K562 (cell line): ENCODE measurements at regions of chr3 and their contacts with region 1.

Region 1: DNA sequence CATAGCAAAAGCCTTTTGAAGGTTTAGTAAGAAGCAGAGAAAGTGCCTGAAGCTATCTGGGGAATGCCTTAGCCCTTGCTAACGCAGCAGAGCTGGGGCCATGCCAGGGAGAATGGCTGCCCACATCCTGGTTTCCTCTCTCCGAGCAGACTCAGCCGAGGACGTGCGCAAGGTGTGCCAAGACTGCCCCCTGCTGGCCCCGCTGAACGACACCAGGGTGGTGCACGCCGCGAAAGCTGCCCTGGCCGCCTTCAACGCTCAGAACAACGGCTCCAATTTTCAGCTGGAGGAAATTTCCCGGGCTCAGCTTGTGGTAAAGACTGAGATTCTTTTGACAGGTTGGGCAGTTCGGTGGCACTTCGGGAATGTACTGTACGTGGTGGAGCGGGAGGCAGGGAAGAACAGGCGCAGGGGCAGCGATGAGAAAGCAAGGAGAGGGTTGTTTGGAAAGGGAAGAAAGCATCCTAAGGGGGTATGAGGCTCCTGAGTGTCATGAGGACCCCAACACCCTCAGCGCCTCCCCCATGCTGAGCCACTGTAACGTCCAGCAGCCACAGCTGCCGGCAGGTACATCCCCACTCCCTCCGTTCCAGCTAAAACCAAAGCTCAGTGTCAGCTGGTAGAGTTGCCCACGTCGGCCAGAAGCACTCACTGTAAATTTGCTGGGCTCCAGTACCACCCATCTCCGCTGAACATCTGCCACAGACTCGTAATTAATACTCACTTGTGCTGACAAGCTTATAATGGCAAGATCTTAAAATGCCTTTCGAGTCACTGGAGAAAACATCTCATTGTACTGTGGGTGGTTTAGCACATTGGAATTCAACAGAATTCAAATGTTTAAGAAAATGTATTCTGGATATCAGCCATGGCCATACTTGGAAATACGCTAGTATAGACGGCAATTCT is 4.4 kb downstream of the AHSG start:
- DNase-seq: peak; percentile 75 to 85 (median 82)
- ATAC-seq: peak; percentile 98
- H3K4me3 ChIP-seq: peak overlapping the region; percentile 15; the same call in 1 of the 2 replicates
- H3K27ac ChIP-seq: no peak overlapping the region
- H3K4me1 ChIP-seq: peaks cover 3 to 10% of the 10 kb centered on the region in 2 experiments; a peak in 3 of 5 replicates
- H3K27me3 ChIP-seq: peaks cover 10 to 61% of the 10 kb centered on the region in 2 experiments; a peak in 4 of 5 replicates
- CTCF ChIP-seq: peak; percentile 88 to 92 (median 92)
- EP300 ChIP-seq: no peak
- POLR2A ChIP-seq: no peak
- RAD21 ChIP-seq: peak; percentile 87 to 89

Region 2: GRCh38 chr3:186259612-186260383 is 357.5 kb before region 1 on chr3:
- CTCF ChIA-PET with region 1: interaction called, 3 read pairs
- POLR2A ChIA-PET with region 1: no interaction called
- in situ Hi-C with region 1: no loop called
- intact Hi-C with region 1: loop called (anchors 5 kb)
- DNase-seq: peak; percentile 74 to 81 (median 78)
- ATAC-seq: peak; percentile 99
- H3K4me3 ChIP-seq: no peak overlapping the region
- H3K27ac ChIP-seq: no peak overlapping the region
- H3K4me1 ChIP-seq: peaks cover 4 to 7% of the 10 kb centered on the region in 2 experiments; a peak in 2 of 5 replicates
- H3K27me3 ChIP-seq: peaks cover 32 to 66% of the 10 kb centered on the region in 2 experiments
- CTCF ChIP-seq: peak; percentile 89 to 91 (median 90)
- EP300 ChIP-seq: peak; percentile 6; the same call in 1 of the 2 replicates
- POLR2A ChIP-seq: no peak
- RAD21 ChIP-seq: peak; percentile 65 to 84

Region 3: GRCh38 chr3:186442162-186442561 is 175.1 kb before region 1 on chr3:
- CTCF ChIA-PET with region 1: no interaction called
- POLR2A ChIA-PET with region 1: no interaction called
- in situ Hi-C with region 1: no loop called
- intact Hi-C with region 1: no loop called
- DNase-seq: no peak
- ATAC-seq: no peak
- H3K4me3 ChIP-seq: no peak overlapping the region
- H3K27ac ChIP-seq: no peak overlapping the region
- H3K4me1 ChIP-seq: no peaks in the 10 kb centered on the region
- H3K27me3 ChIP-seq: peaks cover 0 to 6% of the 10 kb centered on the region in 2 experiments; a peak in 2 of 5 replicates
- CTCF ChIP-seq: no peak
- EP300 ChIP-seq: no peak
- POLR2A ChIP-seq: no peak
- RAD21 ChIP-seq: no peak

Region 4: DNA sequence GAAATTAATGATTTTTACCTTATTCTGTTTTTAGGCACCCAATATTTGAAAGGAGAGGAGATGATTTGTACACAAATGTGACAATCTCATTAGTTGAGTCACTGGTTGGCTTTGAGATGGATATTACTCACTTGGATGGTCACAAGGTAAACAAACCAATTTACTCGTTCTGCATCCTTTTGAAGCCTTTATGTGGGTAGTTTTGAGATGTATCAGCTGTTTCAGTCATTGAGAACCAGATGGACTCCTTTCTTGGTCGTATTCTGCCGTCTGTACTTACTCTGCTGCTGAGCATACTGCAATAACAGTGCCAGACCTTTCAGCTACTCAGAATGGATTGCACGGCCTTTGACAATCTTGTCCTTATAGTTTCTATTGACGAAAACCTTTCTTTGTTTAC is 33.5 kb before region 1 on chr3:
- CTCF ChIA-PET with region 1: interaction called, 12 read pairs
- POLR2A ChIA-PET with region 1: interaction called, 3 read pairs
- in situ Hi-C with region 1: no loop called
- intact Hi-C with region 1: loop called (anchors 5 kb)
- DNase-seq: no peak
- ATAC-seq: no peak
- H3K4me3 ChIP-seq: no peak overlapping the region
- H3K27ac ChIP-seq: no peak overlapping the region
- H3K4me1 ChIP-seq: peaks cover 0 to 6% of the 10 kb centered on the region in 2 experiments; a peak in 2 of 5 replicates
- H3K27me3 ChIP-seq: no peaks in the 10 kb centered on the region
- CTCF ChIP-seq: no peak
- EP300 ChIP-seq: no peak
- POLR2A ChIP-seq: no peak
- RAD21 ChIP-seq: no peak

Region 5: DNA sequence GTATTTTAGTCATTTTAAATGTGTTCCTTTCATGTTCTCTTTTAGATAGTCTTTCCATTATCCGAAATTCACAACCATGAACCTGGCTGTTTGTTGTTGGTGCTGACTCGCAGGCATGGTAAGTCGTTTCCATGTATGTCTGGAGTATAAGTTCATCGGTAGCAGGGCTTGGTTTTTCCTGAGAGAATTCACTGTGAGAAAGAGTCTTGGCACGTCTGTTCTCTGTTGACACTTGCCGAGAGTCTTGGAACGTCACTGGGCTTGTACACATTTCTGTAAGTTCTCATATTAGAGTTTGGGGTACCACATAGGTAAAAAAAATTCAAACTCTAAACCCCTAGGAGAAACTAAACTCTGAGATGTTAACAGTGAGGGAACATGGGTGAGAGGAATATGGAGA is 136.7 kb after region 1 on chr3:
- CTCF ChIA-PET with region 1: interaction called, 6 read pairs
- POLR2A ChIA-PET with region 1: no interaction called
- in situ Hi-C with region 1: loop called (anchors 10 kb)
- intact Hi-C with region 1: loop called (anchors 1 kb)
- DNase-seq: no peak
- ATAC-seq: no peak
- H3K4me3 ChIP-seq: no peak overlapping the region
- H3K27ac ChIP-seq: no peak overlapping the region
- H3K4me1 ChIP-seq: peaks cover 0 to 5% of the 10 kb centered on the region in 2 experiments; a peak in 2 of 5 replicates
- H3K27me3 ChIP-seq: no peaks in the 10 kb centered on the region
- CTCF ChIP-seq: no peak
- EP300 ChIP-seq: no peak
- POLR2A ChIP-seq: no peak
- RAD21 ChIP-seq: no peak

Region 6: GRCh38 chr3:186815435-186815834 is 198.1 kb after region 1 on chr3:
- CTCF ChIA-PET with region 1: interaction called, 3 read pairs
- POLR2A ChIA-PET with region 1: interaction called, 3 read pairs
- in situ Hi-C with region 1: loop called (anchors 5 kb)
- intact Hi-C with region 1: no loop called
- DNase-seq: peak in 2 of 4 experiments; percentile 54 to 71
- ATAC-seq: peak; percentile 82
- H3K4me3 ChIP-seq: no peak overlapping the region
- H3K27ac ChIP-seq: no peak overlapping the region
- H3K4me1 ChIP-seq: peaks cover 0 to 10% of the 10 kb centered on the region in 2 experiments; a peak in 4 of 5 replicates
- H3K27me3 ChIP-seq: no peaks in the 10 kb centered on the region
- CTCF ChIP-seq: no peak
- EP300 ChIP-seq: 0 out of 2 replicates have a peak, but pooled peaks have one; percentile 27
- POLR2A ChIP-seq: no peak
- RAD21 ChIP-seq: no peak

Region 7: DNA sequence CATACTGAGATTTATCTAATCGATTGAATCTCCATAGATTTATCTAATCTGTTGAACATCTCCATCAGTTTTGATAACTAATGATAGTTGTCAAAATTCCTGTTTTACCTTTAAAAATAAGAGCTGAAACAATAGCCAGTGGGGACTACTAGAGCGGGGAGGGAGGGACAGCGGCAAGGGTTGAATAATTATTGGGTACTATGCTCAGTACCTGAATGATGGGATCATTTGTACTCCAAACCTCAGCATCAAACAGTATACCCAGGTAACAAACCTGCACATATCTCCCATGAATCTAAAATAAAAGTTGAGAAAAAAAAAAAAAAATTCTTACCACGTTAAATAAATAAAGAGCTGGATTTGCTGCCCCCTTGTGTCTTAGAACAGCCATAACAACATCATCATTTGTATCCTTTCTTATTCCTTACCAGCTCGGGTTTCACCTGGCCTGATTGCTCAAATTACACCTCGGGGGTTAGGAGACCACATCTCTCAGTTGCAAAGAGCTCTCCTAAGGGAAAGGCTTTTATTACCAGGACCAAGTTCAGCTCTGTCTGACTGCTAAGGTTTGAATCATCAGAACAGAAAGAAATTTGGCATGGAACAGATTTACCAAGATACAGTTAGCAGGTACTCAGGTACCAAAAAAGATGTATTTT is 547.7 kb after region 1 on chr3:
- CTCF ChIA-PET with region 1: no interaction called
- POLR2A ChIA-PET with region 1: no interaction called
- in situ Hi-C with region 1: no loop called
- intact Hi-C with region 1: loop called (anchors 10 kb)
- DNase-seq: peak; percentile 53 to 70 (median 64)
- ATAC-seq: peak; percentile 78
- H3K4me3 ChIP-seq: no peak overlapping the region
- H3K27ac ChIP-seq: no peak overlapping the region
- H3K4me1 ChIP-seq: no peaks in the 10 kb centered on the region
- H3K27me3 ChIP-seq: peaks cover 0 to 6% of the 10 kb centered on the region in 2 experiments; a peak in 1 of 5 replicates
- CTCF ChIP-seq: peak; percentile 61 to 75 (median 64); a peak in 5 of 6 replicates
- EP300 ChIP-seq: no peak
- POLR2A ChIP-seq: no peak
- RAD21 ChIP-seq: peak; percentile 67 to 77